AG04450 (cell line): ENCODE measurements at regions of chr1 and their contacts with region 1.

Region 1: GRCh38 chr1:222331340-222331739 is 216.6 kb downstream of the HHIPL2 start:
- DNase-seq: peak; percentile 81
- H3K4me3 ChIP-seq: no peak overlapping the region
- H3K27ac ChIP-seq: no peak overlapping the region
- H3K27me3 ChIP-seq: no peaks in the 10 kb centered on the region
- CTCF ChIP-seq: no peak

Region 2: DNA sequence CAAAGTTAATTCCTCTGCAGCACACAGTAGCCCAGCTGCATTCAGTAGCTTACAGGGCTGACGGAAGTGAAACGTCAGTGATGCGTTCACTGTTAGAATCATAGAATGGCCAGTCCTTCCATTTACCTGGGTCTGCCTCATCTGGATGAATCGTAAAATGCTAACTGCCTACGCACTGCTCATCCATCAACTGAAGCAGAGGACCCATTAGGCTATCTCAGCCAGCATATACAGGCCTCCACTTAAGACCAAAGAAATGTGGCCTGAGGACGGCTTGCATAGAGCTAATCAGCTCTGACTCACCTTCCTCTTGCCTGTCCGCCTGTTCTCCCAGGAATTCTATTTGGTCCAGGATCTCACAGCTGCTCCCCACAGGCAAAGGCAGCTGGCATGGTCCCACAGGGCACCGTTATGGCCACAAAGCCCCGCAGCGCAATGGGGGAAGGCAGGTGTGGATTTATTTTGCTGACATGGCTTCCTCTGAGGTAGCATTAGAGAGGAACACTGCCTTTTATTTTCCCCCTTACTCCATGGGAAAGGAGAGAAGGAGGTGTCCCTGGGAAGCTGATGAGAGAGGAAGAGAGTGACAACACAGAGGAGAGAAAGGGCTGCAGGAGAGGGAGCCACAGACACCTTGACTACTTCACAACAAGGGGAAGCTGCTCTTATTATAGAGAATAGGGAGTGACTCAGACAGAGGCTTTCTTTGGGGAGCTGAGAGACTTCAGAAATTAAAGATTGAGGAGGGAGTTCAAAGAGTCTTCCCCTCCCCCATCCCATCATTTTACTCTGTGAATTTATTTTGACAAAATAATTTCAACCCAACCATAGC is 39.0 kb after region 1 on chr1:
- CTCF ChIA-PET with region 1: no interaction called
- POLR2A ChIA-PET with region 1: interaction called, 17 read pairs
- DNase-seq: peak; percentile 83
- H3K4me3 ChIP-seq: no peak overlapping the region
- H3K27ac ChIP-seq: peak overlapping the region; percentile 99
- H3K27me3 ChIP-seq: no peaks in the 10 kb centered on the region
- CTCF ChIP-seq: no peak